GM10248 (cell line): ENCODE measurements at regions of chr22 and their contacts with region 1.

Region 1: DNA sequence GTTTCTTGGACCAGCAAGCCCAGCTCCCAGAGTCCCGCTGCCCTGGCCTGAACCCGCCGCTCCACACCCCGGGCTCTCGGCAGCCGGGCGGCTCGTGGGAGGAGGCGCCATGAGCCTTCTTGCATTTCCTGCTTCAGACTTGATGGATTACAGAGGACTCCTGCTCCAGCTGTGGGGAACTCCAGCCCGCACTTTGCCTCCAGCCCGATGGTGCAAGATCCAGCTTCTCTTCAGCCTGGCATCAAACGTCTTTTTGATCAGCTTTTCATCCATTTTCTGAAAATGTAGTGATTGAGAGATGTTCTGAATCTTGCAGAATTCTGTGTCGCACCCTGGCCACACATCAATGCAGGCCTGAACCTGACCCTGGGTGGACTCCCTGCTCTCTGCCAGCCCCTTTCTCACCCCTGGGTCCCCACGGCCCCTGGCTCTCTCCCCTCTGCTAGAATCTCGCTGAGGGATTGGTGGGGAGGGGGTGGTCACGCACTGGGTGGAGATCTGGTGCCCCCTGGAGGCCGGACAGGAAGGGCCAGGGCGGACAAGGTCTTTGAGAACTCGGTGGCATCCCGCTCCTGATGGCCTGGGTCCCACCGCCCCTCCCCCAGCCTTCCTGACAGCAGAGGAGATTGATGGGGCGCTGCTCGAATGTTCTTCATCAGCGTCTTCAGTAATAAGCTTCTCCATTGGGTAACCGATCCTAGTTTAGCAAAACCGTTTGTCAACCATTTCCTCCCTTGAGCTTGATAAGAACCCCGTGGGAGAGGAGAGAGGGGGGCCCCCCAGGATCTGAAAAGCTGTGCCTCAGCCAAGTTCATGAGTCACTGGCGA is 12.1 kb upstream of the NFAM1 start:
- DNase-seq: peak; percentile 80
- CTCF ChIP-seq: peak; percentile 63

Region 2: DNA sequence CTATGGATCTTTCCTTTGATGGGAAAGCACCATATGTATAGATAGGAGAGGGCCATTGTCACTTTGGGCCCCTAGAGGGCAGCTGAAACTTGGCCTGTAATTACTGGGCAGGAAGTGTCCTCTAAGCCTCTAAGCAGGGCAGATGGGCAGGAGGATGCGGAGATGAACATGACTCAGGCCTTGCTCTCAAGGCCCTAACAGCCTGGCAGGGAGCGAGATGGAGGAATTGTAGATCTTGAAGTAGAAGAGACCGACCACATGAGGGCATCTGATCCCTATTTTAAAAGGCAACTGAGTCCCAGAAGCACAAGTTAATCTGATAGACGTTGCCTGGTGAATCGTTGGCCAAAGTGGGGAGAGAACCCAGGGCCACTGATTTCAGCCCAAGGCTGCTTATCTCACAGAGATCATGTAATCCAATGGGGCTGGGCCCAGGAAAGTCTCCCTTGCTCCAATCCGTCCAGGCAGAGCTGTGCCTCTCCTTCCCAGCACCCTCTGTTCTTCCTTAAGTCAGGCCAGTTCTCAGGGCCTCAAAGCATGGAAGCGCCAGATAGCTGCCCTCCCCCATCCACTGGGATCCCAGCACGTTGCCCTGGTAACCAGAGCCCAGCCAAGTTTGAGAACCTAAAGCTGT is 477.6 kb before region 1 on chr22:
- CTCF ChIA-PET with region 1: interaction called, 18 read pairs
- POLR2A ChIA-PET with region 1: no interaction called
- DNase-seq: peak; percentile 63
- CTCF ChIP-seq: peak; percentile 34

Region 3: GRCh38 chr22:42169055-42169469 is 275.2 kb before region 1 on chr22:
- CTCF ChIA-PET with region 1: interaction called, 80 read pairs
- POLR2A ChIA-PET with region 1: no interaction called
- DNase-seq: peak; percentile 86
- CTCF ChIP-seq: peak; percentile 92

Region 4: GRCh38 chr22:42432020-42432596 is 12.2 kb before region 1 on chr22 and contains the start of gene NFAM1:
- CTCF ChIA-PET with region 1: interaction called, 18 read pairs
- POLR2A ChIA-PET with region 1: no interaction called
- DNase-seq: no peak
- CTCF ChIP-seq: no peak

Region 5: GRCh38 chr22:42462016-42462415 is 17.7 kb after region 1 on chr22:
- CTCF ChIA-PET with region 1: interaction called, 25 read pairs
- POLR2A ChIA-PET with region 1: no interaction called
- DNase-seq: no peak
- CTCF ChIP-seq: no peak

Region 6: DNA sequence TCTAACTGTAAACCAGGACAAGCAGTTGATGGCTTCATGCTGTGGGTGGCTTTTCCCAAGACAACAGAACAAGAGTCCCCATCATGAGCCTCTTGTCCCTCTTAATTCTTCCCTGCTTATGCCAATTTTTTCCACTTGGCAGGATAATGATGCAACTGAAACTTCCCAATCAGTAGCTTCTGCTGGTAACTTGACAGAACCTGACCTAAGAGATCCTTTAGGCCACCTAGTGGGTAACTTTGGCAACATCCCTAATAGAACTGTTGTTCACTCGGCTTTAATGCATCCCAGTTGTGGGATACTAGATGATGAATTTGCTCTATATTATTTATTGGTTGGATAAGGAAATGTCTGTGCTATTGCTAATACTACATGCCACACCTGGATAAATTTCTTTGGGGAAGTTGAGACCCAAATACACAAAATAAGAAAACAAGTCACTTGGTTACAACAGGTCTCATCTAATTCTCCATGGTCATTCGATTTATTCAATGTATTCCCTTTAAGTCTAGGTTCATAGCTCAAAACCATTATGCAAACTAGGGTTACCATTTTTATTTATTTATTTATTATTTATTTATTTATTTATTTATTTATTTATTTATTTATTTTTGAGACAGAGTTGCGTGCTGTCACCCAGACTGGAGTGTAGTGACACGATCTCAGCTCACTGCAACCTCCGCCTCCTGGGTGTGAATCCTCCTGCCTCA is 29.3 kb after region 1 on chr22:
- CTCF ChIA-PET with region 1: interaction called, 33 read pairs
- POLR2A ChIA-PET with region 1: no interaction called
- DNase-seq: peak; percentile 44
- CTCF ChIP-seq: peak; percentile 54